PC-9 (cell line): ENCODE measurements at regions of chr1 and their contacts with region 1.

Region 1: DNA sequence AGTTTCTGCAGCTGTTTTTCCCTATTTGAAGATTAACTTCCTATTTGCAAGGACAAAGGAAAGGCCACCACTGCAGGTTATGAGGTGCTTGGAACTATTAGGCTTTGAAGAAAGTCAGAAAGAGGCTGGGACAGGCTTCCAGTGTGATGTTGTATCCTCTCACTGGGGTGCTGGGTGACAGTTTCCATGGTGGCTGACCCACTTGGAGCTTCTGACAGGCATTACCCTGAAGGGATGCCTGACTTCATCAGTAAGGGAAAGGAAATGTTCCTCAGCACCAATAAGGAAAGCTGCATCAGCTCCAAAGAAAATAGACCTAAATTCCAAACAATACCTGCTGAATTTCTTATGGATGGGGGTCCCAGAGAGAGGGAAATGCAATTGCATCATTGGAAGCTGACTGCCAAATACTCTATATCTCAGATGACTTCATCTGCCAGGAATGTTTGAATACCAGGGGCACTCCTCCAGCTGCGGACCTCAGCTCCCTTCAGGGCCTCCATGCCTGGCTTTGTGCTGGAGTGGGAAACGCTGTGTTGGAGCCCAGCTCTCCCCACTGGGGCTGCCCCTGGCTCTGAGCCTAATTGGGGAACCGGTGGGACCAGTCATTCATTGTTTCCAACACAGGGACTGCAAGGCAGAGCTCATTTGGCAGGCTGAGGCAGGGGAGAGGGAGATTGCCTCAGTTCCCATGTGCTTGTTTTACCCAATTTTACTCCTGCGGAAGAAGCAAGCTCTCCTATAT is 76.6 kb downstream of the RGL1 start:
- DNase-seq: peak; percentile 88 to 94
- H3K4me3 ChIP-seq: peak overlapping the region; percentile 23; the same call in 1 of the 2 replicates
- H3K27ac ChIP-seq: peak overlapping the region; percentile 92
- H3K4me1 ChIP-seq: peaks cover 35% of the 10 kb centered on the region
- H3K27me3 ChIP-seq: no peaks in the 10 kb centered on the region
- CTCF ChIP-seq: no peak

Region 2: DNA sequence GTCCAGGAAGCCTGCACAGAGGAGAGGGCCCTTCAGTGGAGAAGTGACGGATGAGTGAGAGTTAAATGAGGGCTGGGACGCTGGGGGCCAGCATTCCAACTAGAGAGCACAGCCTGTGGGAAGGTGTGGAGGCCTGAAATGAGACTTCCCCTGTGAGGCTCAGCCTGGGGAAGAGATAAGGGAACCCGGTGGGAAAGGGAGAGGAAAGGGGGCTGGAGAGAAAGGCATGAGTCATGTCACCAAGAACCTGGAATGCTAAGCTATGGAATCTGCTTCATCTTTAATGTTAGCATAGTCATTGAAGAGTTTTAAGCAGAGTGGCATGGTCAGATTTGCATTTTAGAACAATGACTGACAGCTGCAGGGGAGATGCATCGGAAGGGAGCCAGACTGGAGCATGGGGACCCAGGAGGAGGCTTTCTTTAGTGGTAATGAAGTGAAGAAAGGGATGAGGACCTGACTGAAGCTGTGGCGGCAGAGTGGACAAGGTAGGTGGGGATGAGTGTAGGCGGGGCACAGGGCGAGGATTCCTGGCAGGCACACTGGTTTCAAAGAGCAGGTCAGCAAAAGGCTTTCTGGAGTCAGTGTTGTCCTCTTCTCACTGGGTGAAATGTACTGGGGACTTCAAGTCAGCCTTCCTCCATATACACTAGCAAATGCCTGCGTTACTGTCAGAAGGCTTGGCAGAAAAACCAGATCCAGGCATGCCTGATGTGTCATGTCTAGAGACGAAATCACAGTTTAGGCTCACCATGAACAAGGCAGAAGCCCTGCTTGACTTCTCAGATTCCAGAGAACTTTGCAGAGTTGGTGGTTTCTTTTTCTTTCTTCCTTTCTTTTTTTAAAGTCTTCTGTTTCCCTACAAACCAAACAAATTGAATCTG is 68.6 kb before region 1 on chr1:
- CTCF ChIA-PET with region 1: no interaction called
- POLR2A ChIA-PET with region 1: no interaction called
- intact Hi-C with region 1: loop called (anchors 2 kb)
- DNase-seq: peak in 1 of 2 experiments; percentile 33
- H3K4me3 ChIP-seq: no peak overlapping the region
- H3K27ac ChIP-seq: no peak overlapping the region
- H3K4me1 ChIP-seq: peaks cover 6% of the 10 kb centered on the region
- H3K27me3 ChIP-seq: no peaks in the 10 kb centered on the region
- CTCF ChIP-seq: no peak

Region 3: DNA sequence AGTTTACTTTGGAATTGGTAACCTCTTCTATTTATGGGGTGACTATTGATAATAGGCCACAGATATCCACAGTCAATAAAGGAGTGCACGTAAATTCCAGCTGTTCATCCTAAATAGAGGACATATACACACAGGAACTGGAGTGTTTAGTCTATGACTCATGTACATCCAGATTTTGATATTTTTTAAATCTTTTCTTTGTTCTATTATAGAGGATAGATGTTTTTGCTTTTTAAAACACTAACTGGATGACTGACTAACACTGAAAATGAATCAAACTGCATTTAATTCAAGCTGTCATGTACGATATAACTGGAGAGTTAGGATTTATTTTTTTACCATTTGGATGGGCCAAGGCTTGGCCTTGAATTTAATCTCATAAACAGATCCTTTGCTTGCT is 30.7 kb before region 1 on chr1:
- CTCF ChIA-PET with region 1: no interaction called
- POLR2A ChIA-PET with region 1: no interaction called
- intact Hi-C with region 1: no loop called
- DNase-seq: no peak
- H3K4me3 ChIP-seq: no peak overlapping the region
- H3K27ac ChIP-seq: no peak overlapping the region
- H3K4me1 ChIP-seq: no peaks in the 10 kb centered on the region
- H3K27me3 ChIP-seq: no peaks in the 10 kb centered on the region
- CTCF ChIP-seq: no peak